ENCODE measurements at regions of chr1 and their contacts with region 1.

Region 1: DNA sequence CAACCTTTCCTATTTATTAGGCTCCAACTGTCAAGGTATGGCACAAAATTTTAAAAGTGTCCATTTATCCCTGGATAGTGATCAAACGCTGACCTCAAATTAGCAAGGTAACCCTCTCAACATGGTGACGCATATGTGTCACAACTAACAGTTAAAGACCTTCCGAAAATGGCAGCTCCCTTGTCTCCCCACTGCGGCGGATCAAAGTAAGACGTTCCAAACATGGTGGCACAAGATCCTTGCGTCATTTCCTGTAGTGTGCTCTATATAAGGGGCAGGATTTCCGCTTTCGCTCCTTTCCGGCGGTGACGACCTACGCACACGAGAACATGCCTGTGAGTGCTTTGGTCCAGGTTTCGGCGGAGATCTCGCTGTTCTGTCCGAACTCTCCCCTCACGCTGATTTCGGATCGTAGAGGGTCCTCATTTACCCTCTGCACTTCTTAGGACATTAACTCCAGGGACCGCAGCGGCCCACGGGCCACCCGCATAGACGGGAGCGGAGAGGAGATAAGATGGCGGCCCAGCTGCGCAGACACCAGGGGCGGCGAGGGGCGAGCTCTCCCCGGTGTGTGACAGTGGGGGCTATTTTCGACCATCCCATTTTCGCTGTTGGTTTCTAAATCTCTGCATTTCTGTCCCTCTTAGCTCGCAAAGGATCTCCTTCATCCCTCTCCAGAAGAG is at the start of gene RPS27:
- DNase-seq: peak; percentile 73
- ATAC-seq: peak; percentile 80
- H3K4me3 Mint-ChIP-seq: peak within 1 kb of the TSS; percentile 98
- H3K27ac Mint-ChIP-seq: peak within 1 kb of the TSS; percentile 99
- H3K4me1 Mint-ChIP-seq: peaks cover 53% of the 10 kb centered on the region
- H3K27me3 Mint-ChIP-seq: no peaks in the 10 kb centered on the region
- CTCF ChIP-seq: no peak
- total RNA-seq, gene RPS27: 3,463 and 4,673 TPM in 2 replicates

Region 2: DNA sequence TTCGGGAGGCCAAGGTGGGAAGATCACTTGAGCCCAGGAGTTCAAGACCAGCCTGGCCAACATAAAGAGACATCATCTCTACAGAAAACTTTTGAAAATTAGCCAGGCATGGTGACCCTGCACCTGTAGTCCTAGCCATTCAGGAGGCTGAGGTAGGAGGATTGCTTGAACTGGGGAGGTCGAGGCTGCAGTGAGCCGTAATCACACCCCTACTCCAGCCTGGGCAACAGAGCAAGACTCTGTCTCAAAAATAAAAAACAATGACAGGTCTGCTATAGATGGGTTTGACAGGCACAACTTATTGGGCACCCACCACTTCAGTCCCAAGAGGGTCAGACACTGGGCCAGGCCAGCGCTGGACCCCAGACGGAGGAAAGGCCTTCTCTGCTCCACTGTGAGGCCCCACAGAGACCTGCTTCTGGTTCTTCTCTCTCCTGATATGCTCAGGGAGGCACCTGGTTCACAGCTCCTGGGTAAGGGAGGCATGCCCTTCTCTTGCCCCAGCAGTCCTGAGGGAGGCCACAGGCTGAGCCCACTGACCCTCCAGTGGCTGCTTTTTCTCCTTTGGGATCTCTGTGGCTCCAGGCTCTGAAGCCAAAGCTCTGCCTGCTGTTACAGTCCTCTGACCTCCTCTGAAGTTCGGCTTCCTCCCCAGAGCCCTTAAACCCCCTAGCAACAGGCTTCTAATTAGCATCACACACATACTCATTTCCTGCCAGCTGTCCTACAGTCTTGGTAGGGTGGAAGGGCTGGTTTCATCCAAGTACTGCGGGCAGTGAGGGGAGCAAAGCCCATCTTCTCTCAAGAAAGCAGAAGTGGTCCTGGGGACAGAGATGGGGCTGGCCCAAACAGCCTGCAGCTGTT is 392.1 kb before region 1 on chr1:
- CTCF ChIA-PET with region 1: no interaction called
- POLR2A ChIA-PET with region 1: interaction called, 11 read pairs
- intact Hi-C with region 1: loop called (anchors 1 kb)
- DNase-seq: peak; percentile 57
- ATAC-seq: peak; percentile 92
- H3K4me3 Mint-ChIP-seq: peak overlapping the region; percentile 73
- H3K27ac Mint-ChIP-seq: peak overlapping the region; percentile 96
- H3K4me1 Mint-ChIP-seq: peaks cover 48% of the 10 kb centered on the region
- H3K27me3 Mint-ChIP-seq: no peaks in the 10 kb centered on the region
- CTCF ChIP-seq: no peak

Region 3: DNA sequence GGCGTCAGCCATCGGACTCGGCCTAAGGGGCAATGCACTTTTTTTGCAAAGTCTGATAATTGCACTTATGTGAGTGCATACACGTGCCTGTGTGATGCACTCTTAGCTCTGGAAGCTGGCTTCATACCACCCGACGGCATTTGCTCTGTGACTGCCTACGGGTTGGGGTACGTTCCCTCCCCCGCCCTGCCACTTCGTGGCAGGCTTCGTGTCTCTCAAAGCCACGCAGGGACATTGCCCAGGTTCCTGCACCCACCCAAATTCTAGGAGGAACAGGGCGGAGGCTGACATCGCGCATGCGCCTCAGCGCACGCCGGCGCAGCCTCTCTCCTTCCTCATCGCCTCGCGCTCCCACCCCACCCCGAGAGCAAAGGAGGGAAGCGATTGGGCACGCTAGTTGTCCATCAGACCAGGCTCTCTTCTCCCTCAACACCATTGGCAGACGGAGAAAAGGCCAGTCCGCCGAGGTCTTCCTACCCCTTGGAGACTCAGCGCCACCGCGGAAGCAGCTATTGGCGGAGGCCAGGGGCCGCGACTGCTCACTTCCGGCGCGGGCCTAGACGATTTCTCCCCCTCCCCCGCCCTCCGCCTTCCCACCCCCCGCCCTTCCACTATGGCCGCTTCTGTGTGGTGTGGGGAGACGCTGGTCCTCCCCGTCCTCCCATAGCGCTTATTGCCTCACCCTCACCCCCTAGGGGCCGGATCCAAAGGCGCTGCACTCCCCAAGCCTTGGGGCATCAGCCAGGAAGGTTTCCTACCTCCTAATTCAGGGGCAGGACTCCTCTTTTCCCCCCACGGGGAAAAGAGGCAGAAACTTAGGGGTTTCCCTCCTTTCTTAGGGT is 262.9 kb before region 1 on chr1 and contains the start of gene INTS3:
- CTCF ChIA-PET with region 1: no interaction called
- POLR2A ChIA-PET with region 1: interaction called, 19 read pairs
- intact Hi-C with region 1: loop called (anchors 2 kb)
- DNase-seq: peak; percentile 90
- ATAC-seq: peak; percentile 96
- H3K4me3 Mint-ChIP-seq: peak within 1 kb of the TSS; percentile 97
- H3K27ac Mint-ChIP-seq: peak within 1 kb of the TSS; percentile 96
- H3K4me1 Mint-ChIP-seq: peaks cover 39% of the 10 kb centered on the region
- H3K27me3 Mint-ChIP-seq: no peaks in the 10 kb centered on the region
- CTCF ChIP-seq: no peak
- total RNA-seq, gene INTS3: 81.1 and 88.6 TPM in 2 replicates

Region 4: DNA sequence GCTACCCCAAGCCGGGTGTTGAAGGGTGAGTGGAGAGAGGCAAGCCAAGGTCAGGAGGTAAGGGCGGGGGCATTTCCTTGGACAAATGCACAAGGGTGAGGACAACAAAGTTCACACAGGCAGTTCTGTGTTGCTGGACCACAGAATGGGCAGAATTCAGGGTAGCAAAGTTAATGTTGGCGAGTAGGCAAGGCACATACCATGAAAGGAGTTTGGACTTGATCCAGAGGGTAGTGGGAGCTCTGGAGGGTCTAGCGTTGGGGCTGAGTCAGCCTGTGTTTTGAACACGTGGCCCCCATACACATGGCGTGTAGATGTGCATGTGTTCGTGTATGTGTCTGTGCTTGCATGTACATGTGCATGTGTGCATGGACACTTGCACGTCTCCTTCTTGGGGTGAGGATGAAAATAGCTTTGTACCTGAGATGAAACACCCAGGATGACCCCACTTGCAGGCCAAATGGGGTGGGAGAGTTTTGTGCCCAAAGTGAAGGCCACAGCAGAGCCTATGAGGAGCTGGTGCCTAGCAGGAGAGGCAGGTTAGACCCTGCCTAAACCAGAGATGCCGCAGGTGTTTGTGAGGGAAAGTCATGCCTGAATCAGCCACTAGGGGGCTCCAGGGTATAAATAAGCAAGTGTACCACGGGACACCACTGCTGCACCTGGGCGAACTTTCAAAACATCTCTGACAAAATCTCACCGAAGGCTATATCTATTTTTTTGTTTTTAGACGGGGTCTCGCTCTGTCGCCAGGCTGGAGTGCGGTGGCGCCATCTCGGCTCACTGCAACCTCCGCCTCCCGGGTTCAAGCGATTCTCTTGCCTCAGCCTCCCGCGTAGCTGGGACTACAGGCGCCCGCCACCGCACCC is 193.6 kb before region 1 on chr1:
- CTCF ChIA-PET with region 1: interaction called, 44 read pairs
- POLR2A ChIA-PET with region 1: interaction called, 33 read pairs
- intact Hi-C with region 1: loop called (anchors 1 kb)
- DNase-seq: peak; percentile 59
- ATAC-seq: peak; percentile 97
- H3K4me3 Mint-ChIP-seq: no peak overlapping the region
- H3K27ac Mint-ChIP-seq: peak overlapping the region; percentile 1
- H3K4me1 Mint-ChIP-seq: peaks cover 16% of the 10 kb centered on the region
- H3K27me3 Mint-ChIP-seq: no peaks in the 10 kb centered on the region
- CTCF ChIP-seq: peak; percentile 89

Region 5: DNA sequence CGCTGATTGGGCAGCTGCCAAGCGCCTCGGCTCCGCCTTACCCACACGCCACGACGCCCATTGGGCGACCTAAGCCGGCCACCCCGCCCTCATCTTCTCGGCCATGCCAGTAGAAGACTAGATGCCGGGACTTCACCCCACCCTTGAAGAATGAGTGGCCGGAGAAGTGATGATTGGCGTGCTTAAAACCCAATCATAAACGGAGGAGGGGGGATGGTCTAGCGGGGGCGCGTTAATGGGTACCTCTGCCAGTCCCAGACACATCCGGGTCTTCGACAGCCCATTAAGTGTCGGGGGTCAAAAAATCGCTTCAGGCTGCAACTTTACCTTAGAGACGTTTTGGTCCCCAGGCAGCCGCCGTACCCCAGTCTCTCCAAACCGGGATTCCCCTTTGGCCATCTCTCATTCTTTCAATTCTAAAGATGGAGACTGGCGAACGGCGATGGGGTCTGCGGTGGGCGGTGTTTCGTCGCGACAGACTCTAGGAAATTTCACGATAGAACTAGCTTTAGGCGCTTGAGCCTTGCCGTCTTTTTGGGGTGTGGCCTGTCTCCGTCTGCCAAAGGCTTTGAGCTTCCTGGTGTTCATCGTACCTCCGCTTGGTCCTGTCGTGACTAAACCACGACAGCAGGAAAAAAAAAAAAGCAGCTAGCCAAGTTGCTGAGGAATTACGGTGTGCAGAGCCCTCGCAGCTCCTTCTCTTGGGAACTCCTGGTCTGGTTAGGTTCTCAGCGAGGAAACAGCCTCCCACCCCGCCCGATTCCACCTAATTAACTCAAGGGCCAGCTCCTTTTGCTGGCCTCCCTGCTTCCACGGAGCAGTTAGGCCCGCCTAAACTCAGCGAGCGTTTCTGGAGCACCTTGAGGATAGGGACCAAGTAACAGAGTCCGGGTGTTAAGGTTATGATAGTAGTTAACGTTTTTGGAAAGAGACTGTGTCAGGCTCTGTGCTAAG is 67.4 kb before region 1 on chr1 and contains the start of gene GATAD2B:
- CTCF ChIA-PET with region 1: interaction called, 11 read pairs
- POLR2A ChIA-PET with region 1: interaction called, 51 read pairs
- intact Hi-C with region 1: loop called (anchors 1 kb)
- DNase-seq: peak; percentile 90
- ATAC-seq: peak; percentile 92
- H3K4me3 Mint-ChIP-seq: peak within 1 kb of the TSS; percentile 95
- H3K27ac Mint-ChIP-seq: peak within 1 kb of the TSS; percentile 95
- H3K4me1 Mint-ChIP-seq: peaks cover 47% of the 10 kb centered on the region
- H3K27me3 Mint-ChIP-seq: no peaks in the 10 kb centered on the region
- CTCF ChIP-seq: no peak
- total RNA-seq, gene GATAD2B: 78.4 and 86.3 TPM in 2 replicates

Region 6: GRCh38 chr1:154062309-154062708 is 71.7 kb after region 1 on chr1:
- CTCF ChIA-PET with region 1: no interaction called
- POLR2A ChIA-PET with region 1: no interaction called
- intact Hi-C with region 1: no loop called
- DNase-seq: no peak
- ATAC-seq: no peak
- H3K4me3 Mint-ChIP-seq: no peak overlapping the region
- H3K27ac Mint-ChIP-seq: no peak overlapping the region
- H3K4me1 Mint-ChIP-seq: no peaks in the 10 kb centered on the region
- H3K27me3 Mint-ChIP-seq: peaks cover 28% of the 10 kb centered on the region
- CTCF ChIP-seq: no peak

Region 7: DNA sequence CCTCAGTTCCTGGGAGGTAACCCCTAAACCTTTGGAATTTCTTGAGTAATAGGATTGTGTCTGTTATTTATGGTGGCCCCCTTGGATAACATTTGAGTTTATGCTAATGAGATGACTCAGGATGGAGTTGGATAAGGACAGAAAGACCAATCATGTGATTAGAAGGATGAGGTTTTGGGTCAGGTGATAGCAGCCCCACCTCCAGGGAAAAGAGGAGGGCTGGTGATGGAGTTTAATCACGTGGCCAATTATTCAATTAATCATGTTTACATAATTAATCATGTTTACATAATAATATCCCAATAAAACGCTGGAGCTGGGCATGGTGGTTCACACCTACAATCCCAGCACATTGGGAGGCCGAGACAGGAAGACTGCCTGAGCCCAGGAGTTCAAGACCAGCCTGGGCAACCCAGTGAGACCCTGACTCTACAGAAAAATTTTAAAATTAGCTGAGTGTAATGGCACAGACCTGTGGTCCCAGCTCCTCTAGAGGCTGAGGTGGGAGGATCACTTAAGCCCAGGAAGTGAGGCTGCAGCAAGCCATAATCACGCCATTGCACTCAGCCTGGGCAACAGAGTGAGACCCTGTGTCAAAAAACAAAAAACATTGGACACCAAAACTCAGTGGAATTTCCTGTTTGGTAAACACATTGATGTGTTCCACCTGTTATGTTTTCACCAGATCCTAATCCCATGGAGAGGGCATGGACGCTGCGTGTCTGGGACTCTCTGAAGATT is 90.9 kb after region 1 on chr1:
- CTCF ChIA-PET with region 1: no interaction called
- POLR2A ChIA-PET with region 1: no interaction called
- intact Hi-C with region 1: no loop called
- DNase-seq: no peak
- ATAC-seq: no peak
- H3K4me3 Mint-ChIP-seq: no peak overlapping the region
- H3K27ac Mint-ChIP-seq: no peak overlapping the region
- H3K4me1 Mint-ChIP-seq: no peaks in the 10 kb centered on the region
- H3K27me3 Mint-ChIP-seq: peaks cover 9% of the 10 kb centered on the region
- CTCF ChIP-seq: no peak

Region 8: DNA sequence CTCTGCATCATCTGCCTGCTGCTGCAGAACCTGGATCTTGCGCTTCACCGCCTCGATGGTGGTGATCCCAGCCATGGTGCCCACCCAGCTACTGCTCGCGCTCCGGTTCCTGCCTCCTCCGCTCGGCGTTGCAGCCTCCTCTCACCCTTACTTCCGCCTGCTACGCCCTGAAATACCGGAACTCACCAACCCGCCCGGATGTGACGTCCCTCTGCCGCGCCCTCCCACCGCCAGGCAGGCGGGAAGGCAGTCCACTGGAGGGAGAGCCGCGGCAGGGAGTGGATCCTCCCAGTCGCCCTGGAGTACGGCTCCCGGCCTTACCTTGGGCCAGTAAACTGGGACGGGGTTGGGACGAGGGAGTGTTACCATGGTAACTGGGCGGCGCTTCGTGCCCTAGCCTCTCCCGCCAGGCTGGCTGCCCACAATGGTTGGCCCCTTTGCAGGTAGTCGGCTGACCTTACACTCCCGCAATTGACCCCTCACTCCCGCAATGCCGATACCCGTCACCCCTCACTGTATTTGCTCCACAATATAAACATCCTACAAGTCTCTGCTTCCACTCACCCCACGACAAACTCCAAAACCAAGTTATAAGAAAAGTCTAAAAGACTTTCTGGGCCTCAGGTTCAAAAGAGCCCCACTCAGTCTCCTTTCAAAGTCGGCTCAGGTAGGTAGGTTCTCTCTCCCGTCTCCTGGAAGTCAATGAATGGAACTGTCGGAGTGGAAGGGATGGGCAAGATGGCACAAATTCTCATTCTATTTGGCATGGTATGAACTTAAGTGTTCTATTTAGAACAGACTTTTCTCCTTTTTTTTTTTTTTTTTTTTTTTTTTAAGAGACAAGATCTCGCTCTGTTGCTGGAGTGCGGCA is 192.7 kb after region 1 on chr1:
- CTCF ChIA-PET with region 1: no interaction called
- POLR2A ChIA-PET with region 1: interaction called, 27 read pairs
- intact Hi-C with region 1: loop called (anchors 2 kb)
- DNase-seq: peak; percentile 93
- ATAC-seq: peak; percentile 76
- H3K4me3 Mint-ChIP-seq: peak overlapping the region; percentile 100
- H3K27ac Mint-ChIP-seq: peak overlapping the region; percentile 100
- H3K4me1 Mint-ChIP-seq: peaks cover 48% of the 10 kb centered on the region
- H3K27me3 Mint-ChIP-seq: peaks cover 2% of the 10 kb centered on the region
- CTCF ChIP-seq: no peak